ENCODE measurements at regions of chr3 and their contacts with region 1.

Region 1: DNA sequence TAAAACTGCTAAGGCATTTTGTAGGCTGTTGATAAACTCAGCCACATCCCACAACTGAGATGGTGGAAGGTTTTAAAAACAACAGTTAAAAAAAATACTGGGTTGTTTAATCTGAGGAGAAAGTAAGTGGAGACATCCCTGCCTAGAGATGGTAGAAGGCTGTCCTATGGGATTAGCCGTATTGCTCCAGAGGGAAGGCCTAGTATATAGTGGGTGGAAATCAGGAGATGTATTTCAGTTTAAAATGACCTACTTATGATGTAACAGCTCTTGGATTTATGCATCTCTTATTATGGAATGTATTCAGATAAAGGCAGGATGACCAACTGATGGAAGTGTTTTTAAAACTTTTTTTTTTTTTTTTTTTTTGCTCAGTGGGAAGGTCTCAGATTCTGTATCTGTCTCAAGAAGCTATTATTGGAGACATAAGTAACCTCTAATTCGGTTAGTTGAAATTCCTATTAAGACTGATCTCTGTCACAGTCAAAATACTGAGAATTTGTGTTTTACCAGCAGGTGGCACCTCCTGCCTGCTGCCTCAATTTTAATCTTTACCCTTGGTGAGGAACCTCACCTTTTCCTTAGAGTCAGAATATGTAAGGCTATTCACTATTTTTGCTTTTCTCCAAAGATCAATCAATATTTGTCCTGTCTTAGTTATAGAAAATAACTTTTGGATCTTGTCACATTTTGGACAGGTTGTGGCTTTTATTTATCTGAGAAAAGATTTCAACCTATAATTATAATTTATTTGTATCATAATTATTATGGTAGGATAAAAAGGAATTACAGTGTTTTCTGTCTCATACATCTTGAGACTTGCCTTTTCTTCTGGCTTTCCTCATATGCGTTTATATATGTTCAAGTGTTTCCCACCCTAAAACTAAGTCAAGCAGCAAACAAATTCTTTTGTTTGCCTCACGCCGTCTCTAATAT is 63.0 kb downstream of the VPS8 start:
- DNase-seq: no peak
- ATAC-seq: no peak

Region 2: DNA sequence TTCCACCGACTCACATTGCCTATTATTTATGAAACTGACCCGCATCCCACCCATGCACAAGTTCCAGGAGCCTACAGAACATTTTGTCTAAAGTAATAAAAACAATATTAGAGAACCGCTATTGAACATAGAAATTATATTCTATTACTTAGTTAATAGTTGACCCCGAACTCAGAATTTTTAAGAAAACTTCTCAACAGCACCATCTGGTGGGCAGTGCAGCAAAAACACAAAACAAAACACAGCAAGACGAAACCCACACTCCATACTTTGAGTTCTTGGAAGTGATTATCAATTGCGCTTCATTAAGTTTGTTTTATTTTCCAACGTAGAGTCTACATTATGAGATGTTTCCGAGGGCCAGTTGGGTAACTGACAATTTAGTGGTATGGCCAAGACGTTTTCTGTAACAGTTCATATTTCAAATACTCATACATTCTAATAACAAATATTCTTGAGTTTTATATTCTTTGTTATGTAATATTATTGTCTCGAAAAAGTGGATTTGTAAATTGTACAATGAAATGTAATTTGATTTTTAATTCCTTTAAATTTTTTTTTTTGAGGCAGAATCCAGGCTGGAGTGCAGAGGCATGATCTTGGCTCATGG is 301.9 kb after region 1 on chr3:
- intact Hi-C with region 1: loop called (anchors 2 to 5 kb)
- DNase-seq: peak; percentile 28
- ATAC-seq: no peak